Transverse colon (tissue), 4 donors: ENCODE measurements at regions of chr10 and their contacts with region 1.

Region 1: GRCh38 chr10:82245906-82246560 is 371.0 kb downstream of the NRG3 start:
- DNase-seq: no peak
- H3K4me3 ChIP-seq: no peak overlapping the region
- H3K27ac ChIP-seq: no peak overlapping the region
- H3K4me1 ChIP-seq: peaks cover 0 to 16% (median 3%) of the 10 kb centered on the region in 4 donors
- H3K27me3 ChIP-seq: no peaks in the 10 kb centered on the region
- CTCF ChIP-seq: no peak
- EP300 ChIP-seq: no peak
- POLR2A ChIP-seq: no peak

Region 2: DNA sequence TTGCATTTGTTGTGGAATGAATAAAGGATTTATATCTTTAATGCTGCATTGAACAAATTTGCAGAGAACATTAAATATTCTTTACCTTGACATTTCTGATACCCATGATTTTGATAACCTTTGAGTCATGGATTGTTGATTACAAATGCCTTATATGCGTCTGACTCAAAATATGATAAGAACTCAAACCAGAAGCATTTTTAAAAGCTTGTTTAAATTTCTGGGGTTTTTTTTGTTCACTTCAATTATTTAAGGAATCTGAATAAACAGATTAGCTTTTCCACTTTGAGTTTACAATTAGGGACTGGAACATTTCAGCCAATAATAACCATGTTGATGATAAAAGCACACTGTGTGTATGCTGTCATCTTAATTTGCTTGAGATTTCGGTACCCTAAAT is 117.5 kb before region 1 on chr10:
- in situ Hi-C with region 1: no loop called
- intact Hi-C with region 1: no loop called
- DNase-seq: no peak
- H3K4me3 ChIP-seq: no peak overlapping the region
- H3K27ac ChIP-seq: no peak overlapping the region
- H3K4me1 ChIP-seq: no peaks in the 10 kb centered on the region
- H3K27me3 ChIP-seq: no peaks in the 10 kb centered on the region
- CTCF ChIP-seq: no peak
- EP300 ChIP-seq: no peak
- POLR2A ChIP-seq: no peak

Region 3: GRCh38 chr10:82208726-82209125 is 37.3 kb before region 1 on chr10:
- in situ Hi-C with region 1: no loop called
- intact Hi-C with region 1: loop called (anchors 2 kb)
- DNase-seq: no peak
- H3K4me3 ChIP-seq: no peak overlapping the region
- H3K27ac ChIP-seq: no peak overlapping the region
- H3K4me1 ChIP-seq: no peaks in the 10 kb centered on the region
- H3K27me3 ChIP-seq: no peaks in the 10 kb centered on the region
- CTCF ChIP-seq: no peak
- EP300 ChIP-seq: no peak
- POLR2A ChIP-seq: no peak